ENCODE measurements at regions of chr1 and their contacts with region 1.

Region 1: GRCh38 chr1:162285149-162285561 is 91.5 kb downstream of the SPATA46 start:
- DNase-seq: peak; percentile 15 to 42
- ATAC-seq: peak; percentile 78 to 90 (median 86)
- H3K4me3 ChIP-seq: no peak overlapping the region
- H3K27ac ChIP-seq: peak overlapping the region in 7 of 10 donors; percentile 14 to 74 (median 42)
- H3K4me1 ChIP-seq: peaks cover 0 to 31% (median 17%) of the 10 kb centered on the region in 9 donors
- H3K27me3 ChIP-seq: peaks cover 0 to 5% (median 0%) of the 10 kb centered on the region in 7 donors
- CTCF ChIP-seq: no peak

Region 2: GRCh38 chr1:162213281-162213912 is 71.8 kb before region 1 on chr1:
- intact Hi-C with region 1: loop called in 1 of 10 experiments (anchors 10 kb)
- DNase-seq: peak; percentile 19 to 52
- ATAC-seq: peak; percentile 56 to 89 (median 86)
- H3K4me3 ChIP-seq: no peak overlapping the region
- H3K27ac ChIP-seq: peak overlapping the region in 6 of 10 donors; percentile 40 to 73 (median 65)
- H3K4me1 ChIP-seq: peaks cover 0 to 51% (median 13%) of the 10 kb centered on the region in 9 donors
- H3K27me3 ChIP-seq: no peaks in the 10 kb centered on the region
- CTCF ChIP-seq: no peak